Activated B cell treated with CpG ODN at 0.5 μM for 24 hours (primary cell): ENCODE measurements at regions of chr10 and their contacts with region 1.

Region 1: GRCh38 chr10:14837757-14838581 is at the starts of genes CDNF, HSPA14 and MSANTD7:
- DNase-seq: peak; percentile 97
- ATAC-seq: peak; percentile 96
- H3K4me3 Mint-ChIP-seq: peak within 1 kb of the TSS; percentile 95
- H3K27ac Mint-ChIP-seq: peak within 1 kb of the TSS; percentile 91
- H3K4me1 Mint-ChIP-seq: peaks cover 25% of the 10 kb centered on the region
- H3K27me3 Mint-ChIP-seq: no peaks in the 10 kb centered on the region
- CTCF ChIP-seq: no peak
- total RNA-seq, gene CDNF: 0.49 and 0.98 TPM in 2 replicates
- total RNA-seq, gene HSPA14: 16.7 and 20.4 TPM in 2 replicates
- total RNA-seq, gene MSANTD7: 14.9 and 16.5 TPM in 2 replicates

Region 2: GRCh38 chr10:14185316-14186045 is 652.5 kb before region 1 on chr10:
- CTCF ChIA-PET with region 1: no interaction called
- POLR2A ChIA-PET with region 1: interaction called, 9 read pairs
- intact Hi-C with region 1: loop called (anchors 5 kb)
- DNase-seq: peak; percentile 23
- ATAC-seq: peak; percentile 86
- H3K4me3 Mint-ChIP-seq: peak overlapping the region; percentile 64
- H3K27ac Mint-ChIP-seq: peak overlapping the region; percentile 88
- H3K4me1 Mint-ChIP-seq: peaks cover 37% of the 10 kb centered on the region
- H3K27me3 Mint-ChIP-seq: peaks cover 15% of the 10 kb centered on the region
- CTCF ChIP-seq: no peak

Region 3: GRCh38 chr10:14556285-14556956 is 281.5 kb before region 1 on chr10:
- CTCF ChIA-PET with region 1: no interaction called
- POLR2A ChIA-PET with region 1: interaction called, 3 read pairs
- intact Hi-C with region 1: loop called (anchors 5 kb)
- DNase-seq: no peak
- ATAC-seq: peak; percentile 49
- H3K4me3 Mint-ChIP-seq: peak overlapping the region; percentile 59
- H3K27ac Mint-ChIP-seq: peak overlapping the region; percentile 91
- H3K4me1 Mint-ChIP-seq: peaks cover 96% of the 10 kb centered on the region
- H3K27me3 Mint-ChIP-seq: no peaks in the 10 kb centered on the region
- CTCF ChIP-seq: no peak

Region 4: GRCh38 chr10:14648005-14648765 is 189.8 kb before region 1 on chr10:
- CTCF ChIA-PET with region 1: no interaction called
- POLR2A ChIA-PET with region 1: interaction called, 11 read pairs
- intact Hi-C with region 1: loop called (anchors 1 kb)
- DNase-seq: peak; percentile 56
- ATAC-seq: peak; percentile 79
- H3K4me3 Mint-ChIP-seq: peak overlapping the region; percentile 75
- H3K27ac Mint-ChIP-seq: peak overlapping the region; percentile 98
- H3K4me1 Mint-ChIP-seq: peaks cover 80% of the 10 kb centered on the region
- H3K27me3 Mint-ChIP-seq: no peaks in the 10 kb centered on the region
- CTCF ChIP-seq: no peak

Region 5: DNA sequence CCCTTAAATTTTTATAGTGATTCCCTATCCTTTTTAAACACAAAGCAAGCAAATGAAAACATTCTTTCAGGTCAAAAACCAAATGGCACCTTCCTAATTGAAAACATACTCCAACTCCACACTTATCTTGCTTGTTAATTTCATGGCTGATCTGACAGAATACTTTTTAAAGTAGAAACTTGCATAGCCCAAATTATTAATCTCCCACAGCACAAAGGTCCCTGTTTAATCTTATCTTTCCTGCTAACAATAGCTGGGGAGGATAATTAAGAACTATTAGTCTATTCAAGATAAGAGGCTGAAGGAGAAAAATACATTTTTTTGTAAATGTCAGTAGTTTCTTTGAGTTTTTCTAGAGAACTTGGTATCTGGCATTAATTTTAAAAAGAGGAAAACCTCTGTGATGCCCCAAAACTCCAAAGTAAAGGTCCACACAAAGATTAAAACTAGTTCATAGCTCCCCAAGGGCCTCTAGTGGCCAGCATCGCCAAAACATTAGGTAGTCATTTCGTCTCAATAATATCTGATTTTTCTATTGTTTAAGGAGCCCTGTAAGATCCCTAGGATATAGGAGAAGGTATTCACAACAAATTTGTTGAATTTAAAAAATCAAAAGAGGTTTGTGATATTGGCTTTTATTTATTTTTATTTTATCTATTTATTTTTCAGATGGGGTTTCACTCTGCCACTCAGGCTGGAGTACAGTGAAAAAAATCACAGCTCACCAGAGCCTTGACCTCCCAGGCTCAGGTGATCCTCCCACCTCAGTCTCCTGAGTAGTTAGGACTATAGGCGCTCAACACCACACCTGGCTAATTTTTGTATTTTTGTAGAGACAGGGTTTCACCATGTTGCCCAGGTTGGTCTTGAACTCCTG is 14.9 kb before region 1 on chr10:
- CTCF ChIA-PET with region 1: interaction called, 24 read pairs
- POLR2A ChIA-PET with region 1: interaction called, 16 read pairs
- intact Hi-C with region 1: no loop called
- DNase-seq: no peak
- ATAC-seq: peak; percentile 74
- H3K4me3 Mint-ChIP-seq: no peak overlapping the region
- H3K27ac Mint-ChIP-seq: peak overlapping the region; percentile 26
- H3K4me1 Mint-ChIP-seq: peaks cover 24% of the 10 kb centered on the region
- H3K27me3 Mint-ChIP-seq: no peaks in the 10 kb centered on the region
- CTCF ChIP-seq: peak; percentile 25

Region 6: DNA sequence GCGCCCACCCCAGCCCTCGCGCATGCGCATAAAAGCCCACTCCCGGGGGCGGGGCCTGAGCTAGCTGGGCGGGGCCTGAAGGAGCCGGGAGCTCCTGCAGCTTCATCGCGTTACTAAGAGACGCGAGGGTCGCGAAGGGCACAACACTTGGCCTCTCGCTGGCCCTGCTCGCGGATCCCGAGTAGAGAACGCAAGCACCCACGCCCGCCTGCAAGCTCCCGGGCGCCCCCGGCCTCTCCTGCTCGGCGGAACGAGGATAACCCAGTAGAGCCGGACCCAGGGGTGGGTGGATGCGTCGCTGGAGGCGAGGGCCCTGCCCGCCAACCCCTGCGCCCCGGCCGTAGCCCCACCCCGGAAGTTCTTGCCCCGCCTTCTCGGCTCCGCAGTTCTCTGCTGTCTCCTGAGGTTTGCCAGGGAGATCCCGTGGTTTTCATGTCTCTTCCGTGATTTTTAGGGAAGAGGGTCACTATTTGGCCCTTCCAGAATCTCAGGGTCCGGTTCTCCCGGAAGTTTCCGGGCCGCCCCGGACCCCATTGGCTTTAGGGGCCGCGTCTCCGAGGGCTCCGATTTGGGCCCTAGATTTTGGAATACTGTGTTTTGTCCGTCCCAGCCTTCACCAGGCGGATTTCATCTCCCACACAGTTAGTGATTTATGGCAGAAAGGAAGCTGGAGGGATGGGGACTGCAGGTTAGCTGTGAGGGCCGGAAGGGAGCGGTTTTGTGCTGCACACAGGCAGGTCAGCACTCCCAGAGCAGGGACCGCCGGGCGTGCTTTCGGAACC is 121.5 kb after region 1 on chr10 and contains the start of gene MEIG1:
- CTCF ChIA-PET with region 1: interaction called, 4 read pairs
- POLR2A ChIA-PET with region 1: interaction called, 17 read pairs
- intact Hi-C with region 1: loop called (anchors 1 kb)
- DNase-seq: peak; percentile 100
- ATAC-seq: peak; percentile 83
- H3K4me3 Mint-ChIP-seq: peak within 1 kb of the TSS; percentile 97
- H3K27ac Mint-ChIP-seq: peak within 1 kb of the TSS; percentile 98
- H3K4me1 Mint-ChIP-seq: peaks cover 14% of the 10 kb centered on the region
- H3K27me3 Mint-ChIP-seq: no peaks in the 10 kb centered on the region
- CTCF ChIP-seq: no peak
- total RNA-seq, gene MEIG1: 0.49 and 0.54 TPM in 2 replicates

Region 7: DNA sequence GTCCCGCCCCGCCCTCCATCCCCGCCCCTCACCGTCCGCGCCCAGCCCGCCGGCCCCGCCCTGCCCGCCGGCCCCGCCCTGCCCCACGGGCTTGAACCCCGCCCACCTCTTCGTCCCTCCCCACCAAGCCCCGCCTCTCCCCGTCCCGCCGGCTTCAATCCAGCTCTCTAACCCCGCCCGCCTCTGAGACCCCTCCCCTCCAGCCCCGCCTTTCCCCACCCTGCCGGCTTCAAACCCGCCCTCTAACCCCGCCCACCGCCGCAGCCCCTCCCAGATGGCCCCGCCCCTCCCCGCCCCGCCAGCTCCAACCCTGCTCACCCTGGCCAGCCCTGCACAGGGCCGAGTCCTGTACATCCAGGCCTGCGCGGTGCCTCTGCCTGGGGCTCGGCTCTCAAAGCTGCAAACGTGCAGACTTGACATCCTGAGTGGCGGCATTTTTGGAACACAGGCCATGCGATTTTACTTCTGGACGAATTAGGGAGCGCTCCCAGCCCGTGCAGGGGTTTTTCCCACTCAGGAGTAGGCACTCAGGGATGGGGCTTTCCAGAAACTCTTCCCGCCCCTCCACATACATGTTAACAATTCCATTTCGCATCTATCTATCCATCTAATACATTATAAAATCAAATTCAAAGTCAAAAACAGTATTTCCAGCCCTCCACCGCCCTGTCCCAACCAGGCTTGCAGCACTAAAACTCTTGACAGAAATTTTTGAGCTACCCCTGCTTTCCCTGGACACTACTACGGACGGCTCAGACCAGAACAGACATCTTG is 331.0 kb after region 1 on chr10:
- CTCF ChIA-PET with region 1: no interaction called
- POLR2A ChIA-PET with region 1: interaction called, 3 read pairs
- intact Hi-C with region 1: loop called (anchors 5 kb)
- DNase-seq: peak; percentile 79
- ATAC-seq: peak; percentile 89
- H3K4me3 Mint-ChIP-seq: peak overlapping the region; percentile 58
- H3K27ac Mint-ChIP-seq: no peak overlapping the region
- H3K4me1 Mint-ChIP-seq: peaks cover 26% of the 10 kb centered on the region
- H3K27me3 Mint-ChIP-seq: no peaks in the 10 kb centered on the region
- CTCF ChIP-seq: no peak